PC-9 (cell line): ENCODE measurements at regions of chr17 and their contacts with region 1.

Region 1: DNA sequence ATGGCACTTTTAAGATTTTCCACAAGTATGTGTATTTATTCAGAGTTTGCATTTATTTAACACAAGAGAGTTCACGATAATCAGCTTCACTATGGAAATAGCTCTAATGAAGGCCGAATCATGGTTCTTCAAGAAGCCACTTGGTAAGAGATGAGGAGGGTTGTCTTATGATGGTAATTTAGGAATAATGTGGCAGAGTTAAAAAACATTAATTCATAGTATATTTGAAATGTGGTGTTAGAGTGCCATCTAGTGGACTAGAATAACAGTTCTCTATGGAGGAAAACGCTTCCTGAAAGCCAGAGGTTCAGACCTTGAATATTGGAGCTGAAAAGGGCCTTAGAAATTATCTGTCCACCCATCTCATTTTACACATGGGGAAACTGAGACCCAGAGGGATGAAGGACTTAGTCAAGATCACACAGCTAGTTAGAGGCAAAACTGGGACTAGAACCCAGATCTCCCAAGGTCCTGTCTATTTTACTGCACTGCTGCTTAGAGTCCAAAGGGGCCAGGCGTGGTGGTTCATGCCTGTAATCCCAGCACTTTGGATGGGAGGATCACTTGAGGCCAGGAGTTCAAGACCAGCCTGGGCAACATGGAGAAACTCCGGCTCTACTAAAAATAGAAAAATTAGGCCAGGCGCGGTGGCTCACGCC is 33.8 kb upstream of the KPNB1 start:
- DNase-seq: peak in 1 of 2 experiments; percentile 49
- H3K4me3 ChIP-seq: no peak overlapping the region
- H3K27ac ChIP-seq: 0 out of 2 replicates have a peak overlapping the region, but pooled peaks have one; percentile 7
- H3K4me1 ChIP-seq: peaks cover 30% of the 10 kb centered on the region
- H3K27me3 ChIP-seq: no peaks in the 10 kb centered on the region
- CTCF ChIP-seq: peak; percentile 93

Region 2: DNA sequence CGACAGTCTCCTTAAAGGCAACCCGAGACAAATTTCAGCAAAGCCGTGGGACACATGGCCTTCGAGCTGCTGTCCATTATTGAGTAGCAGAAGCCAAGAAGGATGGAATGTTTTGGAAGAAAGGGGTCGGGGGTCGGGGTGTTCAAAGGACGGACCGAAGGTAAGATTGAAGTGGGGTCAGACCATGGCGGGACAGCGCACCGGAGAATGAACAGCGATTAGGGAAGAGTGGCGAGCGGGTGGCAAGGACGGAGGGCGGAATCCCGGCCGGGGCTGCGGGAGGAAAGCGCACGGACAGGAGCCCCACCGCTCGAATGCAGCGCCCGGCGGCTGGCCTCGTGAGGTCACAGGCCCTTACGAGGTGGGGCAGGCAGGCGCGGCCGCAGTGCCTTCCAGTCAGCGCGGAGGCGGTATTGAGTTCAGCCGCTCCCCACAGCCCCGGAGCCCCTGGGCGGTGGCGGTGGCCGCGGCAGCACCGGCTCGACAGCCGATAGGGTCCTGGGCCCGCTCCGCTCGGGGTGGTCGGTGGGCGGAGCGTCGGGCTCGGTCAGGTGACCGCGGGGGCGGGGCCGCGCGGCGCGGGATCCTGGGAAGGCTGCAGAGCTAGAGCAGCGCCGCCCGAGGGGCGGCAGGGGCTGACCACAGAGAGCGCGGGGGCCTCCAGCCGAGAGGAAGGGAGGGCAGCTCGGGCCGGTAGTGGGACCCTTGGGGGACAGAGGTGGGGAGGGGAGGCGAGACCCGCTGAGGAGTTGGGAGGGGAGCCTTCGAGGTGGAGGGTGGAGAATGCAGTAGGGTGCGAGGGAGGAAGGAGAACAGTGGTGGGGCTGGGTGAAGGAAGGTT is 292.3 kb before region 1 on chr17 and contains the start of gene EFCAB13:
- CTCF ChIA-PET with region 1: no interaction called
- POLR2A ChIA-PET with region 1: no interaction called
- intact Hi-C with region 1: loop called (anchors 5 kb)
- DNase-seq: peak; percentile 79 to 84
- H3K4me3 ChIP-seq: peak within 1 kb of the TSS; percentile 65
- H3K27ac ChIP-seq: peak within 1 kb of the TSS; percentile 16; the same call in 1 of the 2 replicates
- H3K4me1 ChIP-seq: peaks cover 11% of the 10 kb centered on the region
- H3K27me3 ChIP-seq: no peaks in the 10 kb centered on the region
- CTCF ChIP-seq: no peak
- total RNA-seq, gene EFCAB13: 3.2 and 3.3 TPM in 2 replicates

Region 3: DNA sequence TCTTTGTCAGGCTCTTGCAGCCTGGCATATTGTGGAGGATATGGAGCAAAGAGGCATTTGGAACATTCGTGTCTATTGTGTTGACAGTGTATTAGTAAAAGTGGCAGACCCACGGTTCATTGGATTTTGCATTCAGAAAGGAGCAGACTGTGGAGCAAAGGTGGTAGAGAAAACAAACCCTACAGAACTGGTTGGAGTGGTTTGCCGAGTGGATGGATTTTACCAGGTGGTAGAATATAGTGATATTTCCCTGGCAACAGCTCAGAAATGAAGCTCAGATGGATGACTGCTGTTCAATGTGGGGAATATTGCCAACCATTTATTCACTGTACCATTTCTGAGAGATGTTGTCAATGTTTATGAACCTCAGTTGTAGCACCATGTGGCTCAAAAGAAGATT is 247.6 kb before region 1 on chr17:
- CTCF ChIA-PET with region 1: no interaction called
- POLR2A ChIA-PET with region 1: no interaction called
- intact Hi-C with region 1: loop called (anchors 10 kb)
- DNase-seq: peak; percentile 33 to 82
- H3K4me3 ChIP-seq: peak overlapping the region; percentile 22; the same call in 1 of the 2 replicates
- H3K27ac ChIP-seq: peak overlapping the region; percentile 19
- H3K4me1 ChIP-seq: peaks cover 29% of the 10 kb centered on the region
- H3K27me3 ChIP-seq: no peaks in the 10 kb centered on the region
- CTCF ChIP-seq: no peak